Posterior cingulate gyrus (tissue), 11 donors: ENCODE measurements at regions of chr11 and their contacts with region 1.

Region 1: GRCh38 chr11:35617687-35618496 is at the start of gene FJX1:
- DNase-seq: peak; percentile 26 to 91 (median 36)

Region 2: DNA sequence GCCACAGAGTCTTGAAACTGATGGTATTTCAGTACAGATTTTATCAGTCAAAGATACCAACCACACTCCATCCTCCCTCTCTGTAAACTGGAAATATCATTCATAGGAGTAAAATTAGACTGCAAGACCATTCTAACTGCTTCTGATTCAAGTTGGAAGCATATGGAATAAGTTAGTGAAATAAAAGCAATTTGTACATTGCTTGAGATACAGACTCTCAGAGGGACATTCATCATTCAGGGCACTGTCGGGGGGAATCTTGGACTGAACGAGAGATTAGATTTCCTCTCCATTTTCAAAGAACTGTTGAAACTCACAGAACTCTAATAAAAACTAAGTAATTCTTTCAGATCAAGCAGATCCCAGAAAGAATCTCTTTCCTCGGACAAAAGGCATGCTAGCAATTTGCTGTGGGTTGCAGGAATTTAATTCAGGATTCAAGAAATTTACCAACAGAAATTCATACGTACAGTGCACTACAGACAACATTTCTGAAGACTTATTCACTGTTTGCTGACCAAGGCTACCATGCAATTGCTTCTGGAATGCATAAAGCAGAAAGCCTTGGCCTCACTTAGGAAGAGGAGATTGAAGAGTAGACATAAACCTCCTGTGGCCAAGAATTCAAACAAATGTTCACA is 126.5 kb before region 1 on chr11:
- intact Hi-C with region 1: loop called (anchors 10 kb)
- DNase-seq: no peak

Region 3: DNA sequence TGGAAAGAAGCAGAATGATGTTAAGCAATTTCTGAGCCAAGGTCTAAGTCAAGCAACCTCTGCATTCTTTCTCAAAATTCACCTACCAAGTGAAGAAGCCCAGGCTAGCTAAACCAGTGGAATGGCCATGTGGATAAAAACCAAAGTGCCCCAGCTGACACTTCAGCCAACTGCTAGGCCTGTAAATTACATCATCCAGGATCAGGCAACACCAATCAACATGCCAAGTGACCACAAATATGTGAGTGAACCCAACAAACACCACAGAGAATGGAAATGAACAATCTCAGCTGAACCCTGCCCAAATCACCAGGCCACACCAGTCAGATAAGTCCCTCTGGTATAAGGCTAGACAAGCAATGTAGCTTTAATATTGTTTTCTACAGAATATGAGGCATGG is 24.7 kb before region 1 on chr11:
- intact Hi-C with region 1: no loop called
- DNase-seq: no peak

Region 4: DNA sequence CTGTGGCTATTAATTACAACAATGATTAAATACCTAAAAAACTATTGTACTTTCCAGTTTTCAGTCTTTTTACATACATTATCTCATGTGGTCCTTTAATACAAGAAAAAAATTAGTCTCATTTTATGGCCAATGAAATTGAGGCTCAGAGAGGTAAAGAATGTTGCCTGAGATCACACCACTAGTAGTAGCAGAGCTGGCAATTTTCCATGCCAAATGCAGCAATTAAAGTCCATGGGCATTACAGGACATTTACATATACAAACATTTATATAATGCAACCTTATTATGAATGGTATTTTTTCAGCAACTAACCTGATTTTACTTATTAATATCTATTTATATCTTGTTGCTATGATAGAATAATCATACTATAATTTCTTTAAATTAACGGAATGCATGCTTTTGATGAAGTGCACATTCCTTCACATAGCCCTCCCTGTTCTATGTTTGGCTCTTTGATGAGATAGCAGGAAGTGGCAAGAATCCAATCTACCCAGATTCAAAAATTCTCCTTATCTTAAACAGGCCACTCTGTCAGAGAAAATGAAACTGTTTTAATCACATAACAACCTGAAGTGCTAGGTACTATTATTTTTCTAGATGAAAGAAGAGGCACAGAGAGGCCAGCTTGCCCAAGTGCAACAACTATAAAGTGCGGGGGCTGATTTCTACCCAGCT is 205.1 kb after region 1 on chr11:
- intact Hi-C with region 1: loop called (anchors 1 kb)
- DNase-seq: no peak

Region 5: DNA sequence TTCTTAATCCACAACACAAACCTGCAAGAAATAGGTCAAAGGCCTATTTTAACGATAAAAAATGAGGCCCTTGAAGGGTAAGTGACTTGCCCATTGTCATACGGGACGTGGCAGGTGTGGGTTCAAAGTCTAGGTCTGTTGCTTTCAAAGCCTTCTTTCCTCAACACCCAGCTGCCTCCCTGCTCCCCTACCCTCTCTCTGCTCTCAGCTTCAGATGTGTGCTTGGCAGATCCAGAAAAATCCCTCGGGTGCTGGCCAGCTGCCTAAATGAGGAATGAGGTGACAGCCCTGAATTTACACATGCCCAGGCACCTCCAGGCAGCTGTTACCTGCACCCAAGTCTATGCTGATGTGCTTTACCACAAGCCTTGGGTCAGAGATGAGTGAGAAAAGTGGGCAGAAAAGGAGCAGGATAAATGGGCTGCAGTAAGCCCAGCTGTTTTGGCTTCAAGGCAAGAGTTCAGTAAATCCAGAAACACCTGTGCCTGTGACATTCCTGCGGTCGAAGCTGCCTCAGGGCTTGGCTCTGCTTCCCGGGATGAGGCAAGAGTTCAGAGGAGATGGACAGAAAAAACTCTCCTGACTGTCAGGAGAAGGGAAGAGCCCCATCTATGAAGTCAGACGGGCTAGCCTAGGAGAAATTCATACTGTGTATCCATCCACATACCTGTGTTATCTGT is 276.0 kb after region 1 on chr11:
- intact Hi-C with region 1: no loop called
- DNase-seq: peak in 1 of 10 donors; percentile 49

Region 6: DNA sequence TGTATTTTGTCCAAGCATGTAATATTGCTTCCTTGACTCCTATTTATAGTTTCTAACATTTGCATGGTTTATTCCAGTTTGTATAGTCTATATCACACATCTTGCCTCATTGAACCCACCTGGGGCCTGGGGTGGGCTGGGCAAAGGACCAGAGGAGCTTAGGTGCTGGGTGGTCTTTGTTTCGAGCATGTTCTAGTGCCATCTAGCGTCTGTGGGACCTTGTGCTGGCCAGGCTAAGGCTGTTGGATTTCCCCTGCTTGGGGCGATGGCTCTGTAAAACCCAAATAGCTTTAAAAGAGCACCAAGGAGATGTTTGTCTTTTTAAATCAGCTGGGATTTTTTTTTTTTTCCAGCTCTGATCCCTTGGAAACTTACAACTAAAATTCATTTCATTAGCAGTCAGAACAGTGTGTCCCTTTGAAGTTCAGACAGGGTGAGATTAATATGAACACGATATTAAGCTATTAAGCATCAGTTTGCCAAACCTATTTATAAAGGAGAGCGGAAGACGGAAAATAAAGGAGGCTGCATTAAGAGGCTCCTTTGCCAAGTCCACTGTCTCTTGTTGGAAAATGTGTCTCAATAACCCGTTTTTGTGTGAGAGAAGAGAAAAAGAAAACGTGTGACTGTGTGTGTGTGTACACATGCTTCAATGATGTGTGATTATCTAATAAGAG is 514.0 kb after region 1 on chr11:
- intact Hi-C with region 1: loop called (anchors 1 kb)
- DNase-seq: peak in 9 of 10 donors; percentile 46 to 94 (median 66)

Region 7: DNA sequence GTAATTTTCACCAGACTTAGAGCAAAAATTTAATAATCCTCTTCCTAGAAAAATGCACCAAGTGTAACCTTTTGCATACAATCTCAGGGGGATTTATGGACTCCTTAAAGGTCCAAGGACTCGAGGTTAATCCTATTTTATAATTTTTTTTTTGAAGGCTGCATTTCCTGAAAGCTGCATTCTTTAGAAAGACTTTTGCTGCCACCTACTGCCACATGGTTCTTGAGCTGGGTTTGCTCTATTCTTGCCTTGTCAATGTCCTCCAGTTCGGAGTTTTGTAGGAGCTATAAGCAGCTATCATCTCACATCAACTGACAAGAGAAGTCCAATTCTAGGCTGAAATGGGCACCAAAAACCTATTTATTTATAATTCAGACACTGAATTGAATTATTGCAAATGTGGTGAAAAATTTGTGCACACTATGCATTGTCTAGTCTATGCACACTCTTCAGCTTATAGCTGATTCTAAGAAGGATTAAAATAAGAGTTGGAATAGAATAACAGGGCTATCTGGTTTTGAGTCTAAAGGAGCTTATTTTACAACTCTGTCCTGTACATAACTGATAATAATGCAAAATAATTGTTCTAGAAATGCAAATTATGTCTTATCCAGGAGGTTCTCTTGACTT is 860.9 kb after region 1 on chr11:
- intact Hi-C with region 1: loop called (anchors 10 kb)
- DNase-seq: peak in 3 of 10 donors; percentile 36 to 57 (median 48)